ENCODE measurements at regions of chr12 and their contacts with region 1.

Region 1: GRCh38 chr12:79690638-79691493 is at the start of gene PAWR:
- DNase-seq: peak; percentile 70
- ATAC-seq: peak; percentile 85
- H3K4me3 ChIP-seq: peak within 1 kb of the TSS; percentile 65 to 78
- H3K27ac ChIP-seq: peak within 1 kb of the TSS; percentile 96
- H3K4me1 ChIP-seq: peaks cover 19 to 37% of the 10 kb centered on the region in 2 experiments
- H3K27me3 ChIP-seq: no peaks in the 10 kb centered on the region
- CTCF ChIP-seq: peak in 1 of 3 experiments; percentile 20; a peak in 1 of 6 replicates
- POLR2A ChIP-seq: peak; percentile 50
- RAD21 ChIP-seq: peak; percentile 45; the same call in 1 of the 2 replicates
- total RNA-seq, gene PAWR: 106 TPM

Region 2: GRCh38 chr12:79555028-79555930 is 135.6 kb before region 1 on chr12:
- CTCF ChIA-PET with region 1: no interaction called
- POLR2A ChIA-PET with region 1: no interaction called
- RAD21 ChIA-PET with region 1: no interaction called
- intact Hi-C with region 1: loop called (anchors 5 kb)
- DNase-seq: peak; percentile 26
- ATAC-seq: no peak
- H3K4me3 ChIP-seq: no peak overlapping the region
- H3K27ac ChIP-seq: no peak overlapping the region
- H3K4me1 ChIP-seq: no peaks in the 10 kb centered on the region; a peak in 1 of 4 replicates
- H3K27me3 ChIP-seq: no peaks in the 10 kb centered on the region
- CTCF ChIP-seq: peak; percentile 50 to 68 (median 66); a peak in 5 of 6 replicates
- POLR2A ChIP-seq: no peak
- RAD21 ChIP-seq: peak; percentile 85

Region 3: DNA sequence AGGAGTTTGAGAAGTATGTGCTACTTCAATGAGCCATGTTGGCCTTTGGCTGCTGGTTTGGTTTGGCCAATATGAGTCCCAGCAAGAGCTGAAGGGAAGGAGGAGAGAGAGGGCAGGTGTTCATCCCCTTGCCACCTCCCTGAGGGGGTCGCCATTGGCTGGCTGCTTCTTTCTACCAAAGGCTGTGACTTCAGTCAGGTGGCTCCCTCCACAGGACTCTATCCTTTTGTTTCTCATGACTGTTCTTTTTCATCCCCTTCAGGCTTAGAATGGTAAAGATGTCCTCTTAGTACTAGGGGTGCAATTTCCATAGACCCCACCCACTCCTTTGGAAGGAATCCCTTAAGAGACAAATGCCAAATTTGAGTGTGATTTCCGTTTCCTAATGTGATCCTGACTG is 377.3 kb after region 1 on chr12:
- CTCF ChIA-PET with region 1: no interaction called
- POLR2A ChIA-PET with region 1: no interaction called
- RAD21 ChIA-PET with region 1: no interaction called
- intact Hi-C with region 1: no loop called
- DNase-seq: no peak
- ATAC-seq: peak; percentile 53
- H3K4me3 ChIP-seq: no peak overlapping the region
- H3K27ac ChIP-seq: no peak overlapping the region
- H3K4me1 ChIP-seq: no peaks in the 10 kb centered on the region
- H3K27me3 ChIP-seq: no peaks in the 10 kb centered on the region
- CTCF ChIP-seq: 0 out of 6 replicates have a peak, but pooled peaks of 1 of the 3 experiments have one; percentile 10
- POLR2A ChIP-seq: no peak
- RAD21 ChIP-seq: peak; percentile 33; the same call in 1 of the 2 replicates

Region 4: GRCh38 chr12:80175307-80175930 is 484.6 kb after region 1 on chr12:
- CTCF ChIA-PET with region 1: no interaction called
- POLR2A ChIA-PET with region 1: no interaction called
- RAD21 ChIA-PET with region 1: no interaction called
- intact Hi-C with region 1: no loop called
- DNase-seq: no peak
- ATAC-seq: no peak
- H3K4me3 ChIP-seq: no peak overlapping the region
- H3K27ac ChIP-seq: no peak overlapping the region
- H3K4me1 ChIP-seq: no peaks in the 10 kb centered on the region
- H3K27me3 ChIP-seq: no peaks in the 10 kb centered on the region
- CTCF ChIP-seq: no peak
- POLR2A ChIP-seq: no peak
- RAD21 ChIP-seq: no peak